ENCODE measurements at regions of chr21 and their contacts with region 1.

Region 1: DNA sequence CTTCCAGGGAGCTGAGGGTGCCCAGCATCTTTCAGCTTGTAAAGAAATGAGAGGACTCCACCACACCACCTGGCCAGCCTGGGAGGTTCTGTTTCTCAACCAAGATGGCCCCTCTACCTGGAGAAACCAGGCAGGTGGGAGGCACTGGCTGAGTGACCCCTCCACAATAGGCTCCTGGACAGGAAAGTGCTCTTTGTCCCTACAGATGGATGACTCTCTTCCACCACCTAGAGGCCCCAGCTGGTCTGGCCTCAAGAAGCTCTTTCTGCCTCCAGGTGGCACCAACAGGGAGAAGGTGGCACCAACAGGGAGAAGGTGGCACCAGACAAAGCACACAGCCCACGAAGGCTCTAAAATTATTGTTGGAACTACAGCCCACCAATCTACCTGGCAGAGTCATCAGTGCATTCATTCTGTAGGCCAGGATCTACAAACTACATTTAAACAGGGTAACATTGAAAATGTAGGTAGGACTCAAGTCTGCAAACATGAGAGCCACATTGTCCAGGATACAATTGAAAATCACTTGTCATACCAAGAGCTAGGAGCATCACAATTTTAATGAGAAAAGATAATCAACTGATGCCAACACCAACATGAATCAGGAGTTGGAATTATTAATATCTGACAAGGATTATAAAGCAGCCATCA is 14.4 kb downstream of the TMPRSS3 start:
- DNase-seq: peak; percentile 64
- H3K4me3 ChIP-seq: no peak overlapping the region
- H3K27ac ChIP-seq: no peak overlapping the region
- H3K4me1 ChIP-seq: peaks cover 12% of the 10 kb centered on the region
- CTCF ChIP-seq: peak; percentile 89

Region 2: DNA sequence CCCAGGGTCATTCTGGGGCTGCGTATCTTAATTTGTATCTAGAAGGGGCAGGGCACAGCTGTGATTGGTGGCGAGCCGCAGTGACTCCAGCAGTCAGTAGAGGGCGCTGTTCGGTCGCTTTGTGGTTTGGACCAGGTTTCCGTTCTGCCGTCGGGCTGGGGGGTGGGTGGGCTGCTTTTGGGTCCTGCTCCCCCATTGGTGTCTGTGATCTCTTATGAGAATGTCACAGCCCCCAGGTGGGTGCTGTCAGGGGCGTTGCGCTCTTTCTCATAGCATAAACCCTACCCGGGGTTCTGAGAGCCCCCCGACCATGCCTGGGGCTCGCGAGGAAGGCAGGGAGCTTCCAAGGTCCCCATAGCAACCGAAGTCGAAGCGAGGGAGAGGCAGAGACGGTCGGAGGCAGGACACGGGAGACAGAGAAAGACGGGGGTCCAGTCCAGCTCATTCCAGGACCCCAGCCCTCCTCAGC is 71.7 kb before region 1 on chr21:
- CTCF ChIA-PET with region 1: no interaction called
- POLR2A ChIA-PET with region 1: no interaction called
- intact Hi-C with region 1: loop called (anchors 2 kb)
- DNase-seq: peak; percentile 73
- H3K4me3 ChIP-seq: no peak overlapping the region
- H3K27ac ChIP-seq: no peak overlapping the region
- H3K4me1 ChIP-seq: peaks cover 15% of the 10 kb centered on the region
- CTCF ChIP-seq: peak; percentile 91

Region 3: GRCh38 chr21:42453509-42454229 is 72.2 kb after region 1 on chr21:
- CTCF ChIA-PET with region 1: interaction called, 3 read pairs
- POLR2A ChIA-PET with region 1: no interaction called
- intact Hi-C with region 1: loop called (anchors 5 kb)
- DNase-seq: no peak
- H3K4me3 ChIP-seq: no peak overlapping the region
- H3K27ac ChIP-seq: no peak overlapping the region
- H3K4me1 ChIP-seq: peaks cover 29% of the 10 kb centered on the region
- CTCF ChIP-seq: no peak

Region 4: GRCh38 chr21:42763581-42764442 is 382.4 kb after region 1 on chr21:
- CTCF ChIA-PET with region 1: no interaction called
- POLR2A ChIA-PET with region 1: no interaction called
- intact Hi-C with region 1: no loop called
- DNase-seq: no peak
- H3K4me3 ChIP-seq: no peak overlapping the region
- H3K27ac ChIP-seq: no peak overlapping the region
- H3K4me1 ChIP-seq: no peaks in the 10 kb centered on the region
- CTCF ChIP-seq: no peak

Measured in OCI-LY7 (cell line).